ENCODE measurements at regions of chr4 and their contacts with region 1.

Region 1: DNA sequence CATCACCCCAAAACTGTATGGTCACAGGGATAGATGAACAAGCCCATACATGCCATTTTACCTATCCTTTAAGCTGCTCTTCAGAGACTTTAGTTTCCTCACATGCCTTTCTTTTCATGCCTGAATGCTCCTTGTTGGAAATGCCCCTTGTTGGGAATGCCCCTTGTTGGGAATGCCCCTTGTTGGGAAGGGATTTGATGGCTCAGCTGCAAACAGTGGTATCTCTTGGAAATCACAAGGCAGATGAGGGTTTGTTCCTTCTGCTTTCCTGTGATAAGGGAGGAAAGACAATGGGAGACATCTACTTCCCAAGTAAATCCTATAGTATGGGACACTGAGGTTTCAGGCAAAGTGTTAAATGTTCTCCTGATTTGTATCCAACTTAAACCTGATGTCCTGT is 11.5 kb downstream of the CXCL2 start:
- DNase-seq: no peak
- H3K4me3 ChIP-seq: no peak overlapping the region
- H3K27ac ChIP-seq: no peak overlapping the region
- H3K4me1 ChIP-seq: no peaks in the 10 kb centered on the region
- H3K27me3 ChIP-seq: no peaks in the 10 kb centered on the region
- CTCF ChIP-seq: no peak
- EP300 ChIP-seq: no peak
- POLR2A ChIP-seq: no peak
- RAD21 ChIP-seq: no peak

Region 2: DNA sequence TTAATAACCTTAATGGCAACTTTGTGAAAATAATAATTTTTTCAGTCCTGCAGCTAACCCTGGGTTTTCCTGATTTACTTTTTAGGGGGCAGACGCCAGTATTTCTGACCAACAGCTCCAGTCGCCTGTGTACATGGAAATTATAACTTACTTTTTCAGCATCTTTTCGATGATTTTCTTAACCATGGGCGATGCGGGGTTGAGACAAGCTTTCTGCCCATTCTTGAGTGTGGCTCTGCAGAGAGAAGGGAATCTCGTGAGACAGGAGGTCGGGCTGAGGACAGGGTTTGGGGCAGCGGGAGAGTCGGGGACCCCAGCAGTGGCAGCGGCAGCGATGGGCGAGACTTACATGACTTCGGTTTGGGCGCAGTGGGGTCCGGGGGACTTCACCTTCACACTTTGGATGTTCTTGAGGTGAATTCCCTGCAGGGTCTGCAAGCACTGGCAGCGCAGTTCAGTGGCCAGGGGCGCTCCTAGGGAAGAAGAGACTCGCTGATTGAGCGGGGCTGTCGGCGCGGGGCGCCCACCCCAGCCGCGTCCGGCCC is 11.0 kb after region 1 on chr4:
- CTCF ChIA-PET with region 1: interaction called, 24 read pairs
- POLR2A ChIA-PET with region 1: no interaction called
- DNase-seq: peak in 1 of 2 experiments; percentile 63
- H3K4me3 ChIP-seq: peak overlapping the region; percentile 45 to 70 (median 54)
- H3K27ac ChIP-seq: no peak overlapping the region
- H3K4me1 ChIP-seq: peaks cover 0 to 3% (median 0%) of the 10 kb centered on the region in 4 experiments; a peak in 1 of 7 replicates
- H3K27me3 ChIP-seq: peaks cover 0 to 19% (median 8%) of the 10 kb centered on the region in 4 experiments; a peak in 5 of 7 replicates
- CTCF ChIP-seq: no peak
- EP300 ChIP-seq: no peak
- POLR2A ChIP-seq: no peak
- RAD21 ChIP-seq: no peak

Measured in H1 (cell line).